Naive thymus-derived CD4-positive, alpha-beta T cell (primary cell): ENCODE measurements at regions of chr9 and their contacts with region 1.

Region 1: GRCh38 chr9:125261501-125262293 is at the start of gene GAPVD1:
- DNase-seq: peak; percentile 83 to 95 (median 89)
- ATAC-seq: peak; percentile 97
- H3K4me3 ChIP-seq: peak within 1 kb of the TSS; percentile 97
- H3K4me3 Mint-ChIP-seq: peak within 1 kb of the TSS; percentile 82 to 99 (median 98)
- H3K27ac ChIP-seq: peak within 1 kb of the TSS; percentile 94
- H3K27ac Mint-ChIP-seq: peak within 1 kb of the TSS; percentile 83 to 99 (median 94)
- H3K4me1 ChIP-seq: peaks cover 8 to 24% of the 10 kb centered on the region in 2 donors
- H3K4me1 Mint-ChIP-seq: peaks cover 21 to 48% (median 42%) of the 10 kb centered on the region in 7 donors
- H3K27me3 ChIP-seq: no peaks in the 10 kb centered on the region
- H3K27me3 Mint-ChIP-seq: no peaks in the 10 kb centered on the region
- total RNA-seq, gene GAPVD1: 57.3 to 68.9 (median 65.0) TPM

Region 2: GRCh38 chr9:124960409-124960752 is 301.3 kb before region 1 on chr9:
- CTCF ChIA-PET with region 1: no interaction called
- POLR2A ChIA-PET with region 1: no interaction called
- intact Hi-C with region 1: no loop called
- DNase-seq: no peak
- ATAC-seq: no peak
- H3K4me3 ChIP-seq: no peak overlapping the region
- H3K4me3 Mint-ChIP-seq: no peak overlapping the region
- H3K27ac ChIP-seq: no peak overlapping the region
- H3K27ac Mint-ChIP-seq: no peak overlapping the region
- H3K4me1 ChIP-seq: peaks cover 12 to 21% of the 10 kb centered on the region in 2 donors
- H3K4me1 Mint-ChIP-seq: peaks cover 12 to 19% (median 19%) of the 10 kb centered on the region in 7 donors
- H3K27me3 ChIP-seq: no peaks in the 10 kb centered on the region
- H3K27me3 Mint-ChIP-seq: no peaks in the 10 kb centered on the region

Region 3: GRCh38 chr9:125189361-125190289 is 72.1 kb before region 1 on chr9 and contains the start of gene PPP6C:
- CTCF ChIA-PET with region 1: no interaction called
- POLR2A ChIA-PET with region 1: interaction called, 4 read pairs
- intact Hi-C with region 1: loop called (anchors 1 kb)
- DNase-seq: peak; percentile 92 to 97 (median 96)
- ATAC-seq: peak; percentile 98
- H3K4me3 ChIP-seq: peak within 1 kb of the TSS; percentile 99
- H3K4me3 Mint-ChIP-seq: peak within 1 kb of the TSS; percentile 89 to 99 (median 96)
- H3K27ac ChIP-seq: peak within 1 kb of the TSS; percentile 98
- H3K27ac Mint-ChIP-seq: peak within 1 kb of the TSS; percentile 90 to 97 (median 95)
- H3K4me1 ChIP-seq: peaks cover 35 to 51% of the 10 kb centered on the region in 2 donors
- H3K4me1 Mint-ChIP-seq: peaks cover 35 to 79% (median 57%) of the 10 kb centered on the region in 7 donors
- H3K27me3 ChIP-seq: no peaks in the 10 kb centered on the region
- H3K27me3 Mint-ChIP-seq: peaks cover 0 to 4% (median 0%) of the 10 kb centered on the region in 5 donors
- total RNA-seq, gene PPP6C: 32.9 to 54.2 (median 49.5) TPM

Region 4: DNA sequence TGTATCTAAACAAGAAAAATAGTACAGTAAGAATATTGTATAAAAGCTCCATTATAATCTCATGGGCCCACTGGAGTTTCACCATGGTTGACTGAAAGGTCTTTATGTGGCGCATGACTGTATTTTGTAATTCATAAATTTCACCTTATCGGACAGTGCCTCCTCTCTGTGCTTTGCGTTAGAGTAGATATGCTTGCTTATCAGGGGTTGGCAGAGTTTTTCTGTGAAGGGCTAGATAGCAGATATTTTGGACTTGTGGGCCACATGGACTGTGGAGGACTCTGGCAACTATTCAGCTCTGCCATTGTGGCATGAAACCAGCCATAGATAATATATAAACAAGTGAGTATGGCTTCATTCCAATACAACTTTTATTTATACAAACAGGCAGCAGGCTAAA is 23.2 kb after region 1 on chr9:
- CTCF ChIA-PET with region 1: no interaction called
- POLR2A ChIA-PET with region 1: no interaction called
- intact Hi-C with region 1: no loop called
- DNase-seq: no peak
- ATAC-seq: peak; percentile 32
- H3K4me3 ChIP-seq: no peak overlapping the region
- H3K4me3 Mint-ChIP-seq: no peak overlapping the region
- H3K27ac ChIP-seq: no peak overlapping the region
- H3K27ac Mint-ChIP-seq: peak overlapping the region in 1 of 9 donors; percentile 9
- H3K4me1 ChIP-seq: no peaks in the 10 kb centered on the region
- H3K4me1 Mint-ChIP-seq: peaks cover 3 to 23% (median 12%) of the 10 kb centered on the region in 7 donors
- H3K27me3 ChIP-seq: no peaks in the 10 kb centered on the region
- H3K27me3 Mint-ChIP-seq: no peaks in the 10 kb centered on the region

Region 5: DNA sequence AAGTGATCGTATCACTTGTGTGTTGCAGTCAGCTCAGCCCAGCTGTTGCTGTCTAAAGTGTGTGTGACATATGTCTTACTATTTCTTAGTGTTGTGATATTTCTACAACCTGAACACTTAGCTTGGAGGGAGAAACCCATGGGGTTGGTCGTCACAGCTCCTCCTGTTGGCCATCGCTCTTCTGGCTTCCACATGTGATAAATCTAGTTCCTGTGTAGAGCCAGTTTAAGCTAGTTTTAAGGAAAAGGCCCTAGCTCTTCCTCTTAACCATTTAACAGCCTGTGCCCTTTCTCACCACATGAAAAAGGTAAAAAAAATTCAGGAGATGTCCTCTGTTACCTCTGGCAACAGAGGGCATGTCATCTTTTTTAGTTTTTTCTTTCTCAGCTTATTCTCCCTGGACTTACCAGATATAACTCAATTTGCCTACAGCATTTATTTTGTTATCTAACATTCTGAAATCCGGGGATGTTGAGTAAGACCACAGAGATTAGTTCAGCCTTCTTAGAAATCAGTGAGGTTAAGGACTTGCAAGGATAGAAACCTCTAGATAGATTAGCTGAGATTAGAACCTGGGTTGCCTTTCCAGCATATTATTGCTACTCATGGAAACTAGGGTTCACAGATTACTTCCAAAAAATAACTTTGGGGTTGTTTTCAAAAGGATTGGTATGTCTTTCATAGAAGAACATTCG is 100.3 kb after region 1 on chr9:
- CTCF ChIA-PET with region 1: no interaction called
- POLR2A ChIA-PET with region 1: no interaction called
- intact Hi-C with region 1: loop called in 1 of 2 experiments (anchors 10 kb)
- DNase-seq: peak in 5 of 9 donors; percentile 23 to 47 (median 31)
- ATAC-seq: peak; percentile 60
- H3K4me3 ChIP-seq: no peak overlapping the region
- H3K4me3 Mint-ChIP-seq: no peak overlapping the region
- H3K27ac ChIP-seq: peak overlapping the region; percentile 30
- H3K27ac Mint-ChIP-seq: peak overlapping the region in 8 of 9 donors; percentile 5 to 62 (median 42)
- H3K4me1 ChIP-seq: no peaks in the 10 kb centered on the region
- H3K4me1 Mint-ChIP-seq: peaks cover 3 to 18% (median 10%) of the 10 kb centered on the region in 7 donors
- H3K27me3 ChIP-seq: no peaks in the 10 kb centered on the region
- H3K27me3 Mint-ChIP-seq: no peaks in the 10 kb centered on the region